ENCODE measurements at regions of chr9 and their contacts with region 1.

Region 1: DNA sequence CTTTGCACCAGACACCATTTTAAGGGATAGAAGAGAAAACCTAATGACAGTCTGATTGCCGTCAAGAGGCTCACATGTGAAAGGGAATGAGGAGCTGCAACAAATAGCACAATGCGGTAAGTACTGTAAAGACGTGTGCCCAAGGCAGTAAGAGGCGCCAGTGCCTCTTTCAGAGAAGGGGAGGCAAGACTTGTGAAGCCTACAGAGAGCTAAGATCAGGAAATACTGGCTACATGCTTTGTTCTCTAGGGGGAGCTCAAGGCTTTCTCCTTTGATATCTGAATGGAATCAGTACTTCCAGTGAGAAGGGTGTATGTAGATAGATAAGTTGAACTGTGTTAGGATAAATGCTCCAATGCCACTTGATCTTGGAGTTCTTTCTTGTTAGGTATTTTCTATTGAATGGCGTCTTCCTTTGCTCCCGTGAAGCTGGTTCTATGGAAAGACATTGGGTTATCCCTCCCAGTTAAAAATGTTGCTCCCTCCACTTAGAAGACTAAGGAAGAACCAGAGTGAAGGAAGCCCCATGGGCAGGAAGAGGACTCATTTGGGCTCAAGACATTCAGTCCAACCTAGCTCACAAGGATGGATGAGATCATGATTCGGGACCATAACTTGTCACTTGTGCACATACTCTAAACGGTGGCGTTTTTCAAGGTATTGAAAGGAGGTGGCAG is 23.5 kb upstream of the ALDOB start:
- DNase-seq: peak; percentile 37 to 69
- H3K4me3 ChIP-seq: no peak overlapping the region
- H3K4me1 ChIP-seq: no peaks in the 10 kb centered on the region
- H3K27me3 ChIP-seq: no peaks in the 10 kb centered on the region

Region 2: DNA sequence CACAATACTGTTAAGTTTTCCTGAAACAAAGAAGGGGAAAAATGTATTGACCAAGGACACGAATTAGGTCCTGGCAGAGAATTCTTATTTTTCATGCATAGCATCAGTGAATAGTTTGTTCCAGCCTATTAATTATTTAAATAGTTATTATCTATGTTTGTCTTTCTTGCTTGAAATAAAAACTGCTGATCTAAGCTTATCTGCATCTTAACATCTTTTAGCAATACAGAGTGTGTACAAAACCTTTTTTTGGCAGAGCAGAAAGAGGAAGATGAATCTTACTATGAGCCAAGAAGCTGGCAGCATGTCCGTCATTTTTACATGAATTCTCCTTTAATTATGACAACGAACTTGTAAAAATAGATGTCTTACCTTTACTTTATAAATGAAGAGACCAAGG is 453.8 kb before region 1 on chr9:
- in situ Hi-C with region 1: no loop called
- DNase-seq: no peak
- H3K4me3 ChIP-seq: no peak overlapping the region
- H3K4me1 ChIP-seq: no peaks in the 10 kb centered on the region
- H3K27me3 ChIP-seq: no peaks in the 10 kb centered on the region

Region 3: GRCh38 chr9:101530077-101530711 is 71.1 kb after region 1 on chr9:
- in situ Hi-C with region 1: loop called (anchors 5 kb)
- DNase-seq: peak; percentile 64 to 76
- H3K4me3 ChIP-seq: no peak overlapping the region
- H3K4me1 ChIP-seq: no peaks in the 10 kb centered on the region
- H3K27me3 ChIP-seq: no peaks in the 10 kb centered on the region

Region 4: GRCh38 chr9:101650142-101650541 is 191.0 kb after region 1 on chr9:
- in situ Hi-C with region 1: no loop called
- DNase-seq: no peak
- H3K4me3 ChIP-seq: no peak overlapping the region
- H3K4me1 ChIP-seq: peaks cover 20% of the 10 kb centered on the region
- H3K27me3 ChIP-seq: no peaks in the 10 kb centered on the region

Region 5: DNA sequence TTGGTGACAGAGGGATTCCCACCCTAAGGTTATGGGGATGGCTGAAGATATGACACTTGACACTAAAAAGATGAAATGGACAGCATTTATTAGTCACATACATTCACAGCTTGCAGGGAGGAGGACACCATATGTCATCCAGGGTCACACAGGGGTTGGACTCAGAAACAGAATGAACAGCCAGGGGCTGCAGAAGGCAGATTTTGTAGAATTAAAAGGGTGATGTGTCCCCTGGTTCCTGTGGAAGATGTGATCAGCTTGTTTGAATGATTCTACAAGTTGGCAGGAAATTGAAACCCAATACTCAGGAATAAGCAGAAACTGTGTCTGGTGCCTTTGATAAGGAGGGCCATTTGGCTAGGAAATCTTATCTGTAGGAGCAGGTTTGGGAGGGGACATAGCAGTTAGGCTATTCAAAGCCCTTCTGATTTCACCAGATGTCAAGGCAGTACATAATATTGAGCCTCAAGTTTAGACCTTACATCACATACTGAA is 381.6 kb after region 1 on chr9:
- in situ Hi-C with region 1: no loop called
- DNase-seq: no peak
- H3K4me3 ChIP-seq: no peak overlapping the region
- H3K4me1 ChIP-seq: no peaks in the 10 kb centered on the region
- H3K27me3 ChIP-seq: no peaks in the 10 kb centered on the region

Measured in HAP-1 (cell line).